Activated T-helper 2 cell treated with anti-CD3 and anti-CD28 coated beads, Interferon-gamma antibody, Interleukin-2, Interleukin-4, amounts not matched to agents 10 μg/mL and 5 μg/mL and 100 μg/mL, durations not matched to agents 14 hours and 24 hours and 36 hours (primary cell): ENCODE measurements at regions of chr13 and their contacts with region 1.

Region 1: DNA sequence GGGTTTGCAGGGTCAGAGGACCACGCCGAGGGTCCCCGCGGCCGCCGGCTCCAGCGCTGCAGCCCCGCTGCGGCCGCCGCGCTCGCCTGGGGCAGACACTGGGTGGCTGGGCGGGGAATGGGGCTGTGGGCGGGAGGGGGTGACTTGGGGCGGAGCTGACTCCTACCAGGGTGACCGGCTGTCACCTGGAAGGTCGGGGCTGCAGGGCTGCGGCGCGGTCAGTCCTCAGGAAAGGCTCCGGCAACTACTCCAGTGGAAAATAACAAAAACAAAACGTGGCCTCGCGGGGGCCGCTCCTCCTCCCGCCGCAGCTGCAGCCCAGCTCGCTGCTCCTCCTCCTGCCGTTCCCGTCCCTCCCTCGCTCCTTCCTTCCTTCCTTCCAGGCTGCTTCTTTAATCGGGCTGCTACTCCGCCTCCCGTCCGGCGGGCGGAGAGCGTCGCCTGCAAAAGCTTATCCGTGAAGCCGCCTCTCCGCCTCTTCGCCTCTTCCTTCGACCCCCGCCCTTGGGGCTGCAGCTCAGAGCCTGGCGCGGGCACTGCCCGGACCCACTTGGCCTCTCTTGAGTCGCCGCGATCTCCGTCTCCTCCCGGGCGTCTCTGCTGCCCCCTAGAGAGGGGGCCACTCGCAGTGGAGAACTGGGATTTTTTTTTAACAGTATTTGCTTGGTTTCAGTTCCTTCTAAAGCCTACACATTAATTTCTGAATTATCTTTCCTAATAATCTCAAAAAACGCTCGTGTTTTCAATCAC is at the start of gene TBC1D4:
- DNase-seq: peak; percentile 50
- H3K4me3 Mint-ChIP-seq: peak within 1 kb of the TSS; percentile 94
- H3K27ac Mint-ChIP-seq: peak within 1 kb of the TSS; percentile 73
- H3K4me1 Mint-ChIP-seq: peaks cover 25% of the 10 kb centered on the region
- H3K27me3 Mint-ChIP-seq: peaks cover 44% of the 10 kb centered on the region
- total RNA-seq, gene TBC1D4: 36.4 and 39.7 TPM in 2 replicates

Region 2: DNA sequence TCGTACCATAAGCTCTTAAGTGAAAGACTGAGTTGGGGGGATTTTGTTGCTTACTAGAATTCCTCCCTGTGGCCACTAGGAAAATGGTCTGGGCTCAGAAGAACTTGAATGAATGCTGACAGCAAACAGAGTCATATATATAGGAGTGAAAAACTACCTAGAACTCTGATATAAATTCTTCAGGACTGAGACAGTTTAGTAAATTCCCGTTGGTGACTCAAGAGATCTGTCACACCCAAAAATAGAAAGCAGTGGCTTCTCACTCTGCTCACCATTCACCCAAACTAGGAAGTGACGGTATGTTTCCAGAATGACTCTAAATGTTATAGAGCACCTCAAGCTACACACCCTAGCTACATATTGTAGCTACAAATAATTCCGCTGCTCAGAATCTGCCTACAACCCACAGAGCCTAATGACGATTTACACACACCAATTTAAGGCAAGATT is 116.5 kb before region 1 on chr13:
- intact Hi-C with region 1: loop called (anchors 1 kb)
- DNase-seq: peak; percentile 22
- H3K4me3 Mint-ChIP-seq: peak overlapping the region; percentile 59
- H3K27ac Mint-ChIP-seq: peak overlapping the region; percentile 95
- H3K4me1 Mint-ChIP-seq: peaks cover 46% of the 10 kb centered on the region
- H3K27me3 Mint-ChIP-seq: no peaks in the 10 kb centered on the region

Region 3: GRCh38 chr13:75372517-75372916 is 109.7 kb before region 1 on chr13:
- intact Hi-C with region 1: loop called (anchors 2 kb)
- DNase-seq: no peak
- H3K4me3 Mint-ChIP-seq: no peak overlapping the region
- H3K27ac Mint-ChIP-seq: no peak overlapping the region
- H3K4me1 Mint-ChIP-seq: peaks cover 9% of the 10 kb centered on the region
- H3K27me3 Mint-ChIP-seq: peaks cover 2% of the 10 kb centered on the region

Region 4: DNA sequence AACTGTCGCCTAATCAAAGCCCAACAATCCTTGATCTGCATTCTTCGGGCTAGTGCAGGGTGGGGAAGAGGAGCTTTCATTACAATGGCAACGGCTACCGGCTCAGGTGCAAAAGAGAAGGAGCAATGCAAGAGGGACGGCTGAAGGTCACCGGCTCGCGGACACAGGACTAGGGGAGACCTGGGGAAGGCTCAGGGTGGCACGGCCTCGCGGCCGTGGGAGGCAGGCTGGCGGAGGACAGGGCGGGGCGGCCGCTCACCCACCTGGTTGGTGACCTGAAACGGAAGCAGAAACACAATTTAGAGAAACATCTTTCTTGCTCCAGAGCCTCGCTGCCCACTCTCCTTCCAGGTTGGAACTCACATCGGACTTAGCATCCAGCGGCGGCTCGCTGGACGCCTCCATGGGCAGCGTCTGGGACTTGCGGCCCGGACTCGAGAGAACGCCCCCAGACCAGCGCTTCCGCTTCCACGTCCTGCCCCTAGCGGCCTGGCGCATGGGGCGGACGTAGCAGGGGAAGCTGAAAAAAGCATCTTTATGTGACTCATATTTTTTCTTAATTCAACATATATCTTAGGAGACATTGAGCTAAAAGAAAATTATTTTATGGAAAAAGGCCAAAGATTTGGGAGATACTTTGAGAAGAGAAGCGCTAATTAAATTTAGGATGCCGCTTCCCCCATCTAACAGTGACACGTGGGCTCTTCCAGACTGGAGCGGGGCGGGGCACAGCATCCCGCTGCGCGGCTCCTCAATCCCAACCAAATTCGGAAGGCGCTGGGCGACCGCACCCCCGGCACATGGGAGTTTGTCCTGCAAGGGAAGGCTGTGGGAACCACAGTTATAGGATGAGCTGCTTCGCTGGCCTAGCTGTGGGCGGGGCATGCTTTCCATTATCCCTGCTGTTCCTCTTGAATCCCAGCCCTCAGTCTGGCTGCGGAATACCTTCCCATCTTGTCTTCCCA is 55.4 kb after region 1 on chr13 and contains the start of gene COMMD6:
- intact Hi-C with region 1: loop called (anchors 1 kb)
- DNase-seq: peak; percentile 65
- H3K4me3 Mint-ChIP-seq: peak within 1 kb of the TSS; percentile 93
- H3K27ac Mint-ChIP-seq: peak within 1 kb of the TSS; percentile 79
- H3K4me1 Mint-ChIP-seq: peaks cover 31% of the 10 kb centered on the region
- H3K27me3 Mint-ChIP-seq: no peaks in the 10 kb centered on the region
- total RNA-seq, gene COMMD6: 120 TPM in 2 replicates

Region 5: DNA sequence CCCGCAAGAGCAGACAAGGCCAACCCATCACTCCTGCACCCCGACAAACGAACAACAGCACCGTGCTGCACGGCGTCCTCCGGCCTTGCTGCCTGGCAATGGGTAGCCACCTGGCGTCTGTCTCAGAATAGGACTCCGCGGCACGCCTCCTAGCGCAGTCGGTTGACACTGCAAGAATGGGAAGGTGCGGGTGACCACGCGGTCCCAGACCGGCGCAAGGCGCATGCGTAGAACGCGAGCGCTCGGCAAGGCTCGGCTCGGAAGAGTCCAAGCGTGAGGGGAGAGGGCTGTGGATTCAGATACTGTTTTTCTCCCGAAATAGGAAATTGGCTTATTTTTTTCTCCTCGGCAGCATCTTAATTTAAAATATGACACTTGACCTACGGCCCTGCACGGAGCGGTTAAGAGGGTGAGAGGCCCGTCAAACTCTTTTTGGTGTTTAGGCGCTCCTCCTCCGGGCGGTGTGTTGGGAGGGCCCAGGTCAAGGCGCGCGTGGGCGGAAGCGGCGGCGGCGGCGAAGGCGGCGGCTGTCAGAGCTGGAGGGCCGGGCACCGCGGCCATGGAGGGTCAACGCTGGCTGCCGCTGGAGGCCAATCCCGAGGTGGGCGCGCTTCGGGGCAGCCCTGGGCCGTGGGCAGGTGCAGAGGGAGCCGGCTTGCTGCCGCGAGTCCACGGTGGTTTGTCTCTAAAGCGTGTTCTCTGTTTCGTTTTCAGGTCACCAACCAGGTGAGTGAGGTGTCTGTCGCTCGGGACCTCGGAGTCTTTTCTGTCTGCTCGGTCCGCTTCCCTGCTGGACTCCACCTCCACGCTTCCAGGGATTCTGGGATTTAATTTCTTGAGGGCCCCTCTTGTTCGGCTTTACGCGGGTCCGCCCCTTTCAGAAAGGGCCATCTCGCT is 67.3 kb after region 1 on chr13 and contains the start of gene UCHL3:
- intact Hi-C with region 1: loop called (anchors 1 kb)
- DNase-seq: peak; percentile 95
- H3K4me3 Mint-ChIP-seq: peak within 1 kb of the TSS; percentile 97
- H3K27ac Mint-ChIP-seq: peak within 1 kb of the TSS; percentile 96
- H3K4me1 Mint-ChIP-seq: peaks cover 19% of the 10 kb centered on the region
- H3K27me3 Mint-ChIP-seq: no peaks in the 10 kb centered on the region
- total RNA-seq, gene UCHL3: 35.4 and 37.9 TPM in 2 replicates

Region 6: DNA sequence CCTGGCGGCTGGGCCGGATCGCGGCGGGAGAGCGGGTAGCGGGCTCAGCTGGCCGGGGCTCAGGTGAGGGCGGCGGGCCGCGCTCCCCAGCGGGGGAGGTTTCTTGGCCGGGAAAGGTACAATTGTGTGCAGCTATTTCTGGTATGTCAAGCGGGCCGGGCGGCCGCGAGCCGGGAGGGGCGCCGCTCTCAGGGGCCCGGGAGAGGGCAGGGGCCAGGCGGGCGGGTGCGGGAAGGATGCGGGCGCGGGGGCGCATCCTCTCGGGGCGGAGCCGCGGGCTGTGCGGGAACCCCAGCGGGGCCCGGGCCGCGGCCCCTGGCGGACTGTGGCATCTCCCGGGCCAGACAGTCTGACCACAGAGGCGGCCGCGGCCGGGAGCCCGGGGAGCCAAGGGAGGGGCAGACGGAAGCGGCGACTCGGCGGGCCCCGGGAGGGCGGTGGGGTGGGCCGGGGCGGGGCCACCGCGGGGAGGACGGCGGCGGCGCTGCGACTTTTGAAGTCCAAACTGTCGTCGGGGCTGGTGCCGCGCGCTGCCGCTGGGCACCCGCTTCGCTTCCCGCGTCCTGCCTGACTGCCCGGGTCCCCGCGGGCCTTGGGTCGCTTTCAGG is 153.7 kb after region 1 on chr13 and contains the start of gene LMO7:
- intact Hi-C with region 1: loop called (anchors 5 kb)
- DNase-seq: peak; percentile 27
- H3K4me3 Mint-ChIP-seq: peak within 1 kb of the TSS; percentile 73
- H3K27ac Mint-ChIP-seq: no peak within 1 kb of the TSS
- H3K4me1 Mint-ChIP-seq: peaks cover 13% of the 10 kb centered on the region
- H3K27me3 Mint-ChIP-seq: peaks cover 36% of the 10 kb centered on the region
- total RNA-seq, gene LMO7: 6.2 and 6.9 TPM in 2 replicates

Region 7: GRCh38 chr13:76886292-76887075 is 1404.2 kb after region 1 on chr13 and contains the start of gene KCTD12:
- intact Hi-C with region 1: loop called (anchors 5 kb)
- DNase-seq: peak; percentile 75
- H3K4me3 Mint-ChIP-seq: peak within 1 kb of the TSS; percentile 88
- H3K27ac Mint-ChIP-seq: peak within 1 kb of the TSS; percentile 75
- H3K4me1 Mint-ChIP-seq: peaks cover 32% of the 10 kb centered on the region
- H3K27me3 Mint-ChIP-seq: peaks cover 25% of the 10 kb centered on the region
- total RNA-seq, gene KCTD12: 12.7 and 13.2 TPM in 2 replicates